WTC11 (cell line): ENCODE measurements at regions of chr19 and their contacts with region 1.

Region 1: GRCh38 chr19:16041299-16041990 is 34.9 kb upstream of the TPM4 start:
- DNase-seq: peak; percentile 93
- ATAC-seq: peak; percentile 96
- H3K4me3 Mint-ChIP-seq: peak overlapping the region; percentile 38
- H3K27ac Mint-ChIP-seq: no peak overlapping the region
- H3K4me1 Mint-ChIP-seq: 0 out of 2 replicates have a peak, but pooled peaks cover 3% of the 10 kb centered on the region
- H3K27me3 Mint-ChIP-seq: peaks cover 8% of the 10 kb centered on the region
- CTCF ChIP-seq: peak; percentile 97

Region 2: GRCh38 chr19:16111160-16111908 is 69.9 kb after region 1 on chr19 and contains the start of gene RAB8A:
- CTCF ChIA-PET with region 1: interaction called, 22 read pairs
- POLR2A ChIA-PET with region 1: interaction called, 3 read pairs
- DNase-seq: peak; percentile 97
- ATAC-seq: peak; percentile 95
- H3K4me3 Mint-ChIP-seq: peak within 1 kb of the TSS; percentile 96
- H3K27ac Mint-ChIP-seq: peak within 1 kb of the TSS; percentile 96
- H3K4me1 Mint-ChIP-seq: peaks cover 13% of the 10 kb centered on the region
- H3K27me3 Mint-ChIP-seq: peaks cover 2% of the 10 kb centered on the region; the same call in 1 of the 2 replicates
- CTCF ChIP-seq: peak; percentile 86
- total RNA-seq, gene RAB8A: 68.4 to 81.8 TPM (median 74.0 TPM) in 3 replicates